ENCODE measurements at regions of chr2 and their contacts with region 1.

Region 1: DNA sequence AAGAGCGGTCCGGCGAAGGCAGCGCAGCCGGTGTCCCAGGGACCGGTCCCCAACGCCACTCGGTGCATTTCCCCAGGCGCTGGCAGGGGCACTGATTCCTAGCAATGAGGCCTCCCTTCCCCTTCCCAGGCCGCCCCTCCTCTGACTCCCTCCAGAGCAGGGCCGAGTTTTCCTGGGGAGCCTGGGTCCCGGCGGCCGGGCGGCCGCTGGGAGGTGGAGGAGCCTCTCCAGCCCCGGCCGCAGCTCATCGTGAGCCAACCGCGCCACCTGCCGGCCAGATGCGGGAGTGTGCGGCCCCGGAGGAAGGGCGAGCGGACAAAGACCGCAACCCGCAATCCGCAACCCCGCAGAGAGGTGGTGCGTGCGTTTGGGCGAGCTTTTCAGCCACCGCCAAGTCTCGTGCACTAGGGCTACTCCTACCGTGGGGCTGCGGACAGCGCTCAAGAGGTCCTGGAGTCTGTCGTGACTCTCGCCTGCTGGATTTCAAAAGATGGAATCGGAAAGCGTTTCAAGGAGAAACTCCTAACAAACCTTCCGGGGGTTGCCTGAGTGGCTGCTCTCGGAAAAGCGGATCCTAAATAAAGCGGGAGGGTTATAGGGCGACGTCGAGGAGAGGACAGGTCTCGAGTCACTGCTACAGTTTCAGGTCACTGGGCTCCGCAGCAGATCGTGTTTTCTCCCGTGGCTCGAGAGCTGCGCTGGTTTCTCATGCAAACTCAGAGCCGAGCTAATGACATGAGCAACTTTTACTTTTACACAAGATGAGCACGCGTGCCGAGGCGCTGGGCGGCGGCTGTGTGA is 1.5 kb upstream of the EPHA4 start:
- DNase-seq: peak; percentile 96

Region 2: DNA sequence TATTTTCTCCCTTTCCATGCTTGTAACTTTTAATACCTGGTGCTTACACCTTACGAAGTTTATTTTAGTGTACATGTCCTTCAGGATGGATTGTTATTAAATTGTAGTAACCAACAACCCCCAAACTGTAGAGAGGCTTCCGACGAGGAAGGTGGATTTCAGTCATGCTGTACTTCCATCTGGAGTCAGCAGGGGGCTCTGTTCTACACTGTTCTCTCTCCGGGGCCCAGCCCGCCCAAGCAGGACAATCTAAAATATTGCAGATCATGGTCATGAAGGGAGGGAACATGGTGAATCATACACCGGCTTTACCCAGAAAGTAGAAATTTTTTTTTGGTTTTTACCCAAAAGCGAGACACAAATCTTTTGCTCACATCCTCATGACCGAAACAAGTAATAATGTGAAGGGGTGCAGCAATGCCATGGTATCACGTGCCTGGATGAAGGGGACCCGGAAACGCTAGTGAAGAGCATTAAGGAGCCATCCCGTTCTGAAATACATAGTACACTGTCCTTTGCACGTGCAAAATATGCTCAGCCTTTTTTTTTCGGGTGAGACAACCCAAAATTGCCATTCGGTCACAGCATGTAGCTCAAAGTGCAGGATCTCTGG is 886.3 kb before region 1 on chr2:
- intact Hi-C with region 1: loop called (anchors 2 to 5 kb)
- DNase-seq: peak; percentile 83

Region 3: DNA sequence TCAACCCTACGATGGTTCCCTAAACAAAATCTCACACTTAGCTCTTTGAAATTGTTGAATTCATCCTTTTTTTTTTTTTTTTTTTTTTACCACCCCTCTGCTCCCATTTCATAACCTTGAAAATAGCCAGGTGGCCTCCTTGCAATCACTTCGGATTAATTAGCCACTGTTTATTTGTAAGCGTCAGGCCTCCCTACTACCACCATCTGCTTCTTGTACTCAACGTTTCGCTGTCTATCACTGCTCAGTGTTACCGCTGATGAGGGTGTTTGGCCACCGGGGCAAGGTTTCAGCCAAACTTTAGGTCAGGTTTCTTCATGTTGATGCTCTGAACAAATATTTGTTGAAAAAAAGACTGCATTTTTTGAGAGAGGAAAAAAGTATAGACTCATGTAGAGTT is 184.7 kb before region 1 on chr2:
- intact Hi-C with region 1: no loop called
- DNase-seq: no peak

Region 4: GRCh38 chr2:221629468-221629867 is 55.8 kb after region 1 on chr2:
- intact Hi-C with region 1: no loop called
- DNase-seq: no peak

Region 5: GRCh38 chr2:221657821-221658220 is 84.2 kb after region 1 on chr2:
- intact Hi-C with region 1: no loop called
- DNase-seq: no peak